Mammary epithelial cell (primary cell): ENCODE measurements at regions of chr9 and their contacts with region 1.

Region 1: GRCh38 chr9:83062656-83063527 is at the start of gene RASEF:
- DNase-seq: peak; percentile 78
- H3K4me3 ChIP-seq: peak within 1 kb of the TSS; percentile 64 to 74 (median 69)
- H3K27ac ChIP-seq: peak within 1 kb of the TSS; percentile 36
- H3K4me1 ChIP-seq: peaks cover 32% of the 10 kb centered on the region
- H3K27me3 ChIP-seq: no peaks in the 10 kb centered on the region
- CTCF ChIP-seq: peak in 1 of 2 donors; percentile 24
- total RNA-seq, gene RASEF: 1.5 to 3.3 TPM

Region 2: DNA sequence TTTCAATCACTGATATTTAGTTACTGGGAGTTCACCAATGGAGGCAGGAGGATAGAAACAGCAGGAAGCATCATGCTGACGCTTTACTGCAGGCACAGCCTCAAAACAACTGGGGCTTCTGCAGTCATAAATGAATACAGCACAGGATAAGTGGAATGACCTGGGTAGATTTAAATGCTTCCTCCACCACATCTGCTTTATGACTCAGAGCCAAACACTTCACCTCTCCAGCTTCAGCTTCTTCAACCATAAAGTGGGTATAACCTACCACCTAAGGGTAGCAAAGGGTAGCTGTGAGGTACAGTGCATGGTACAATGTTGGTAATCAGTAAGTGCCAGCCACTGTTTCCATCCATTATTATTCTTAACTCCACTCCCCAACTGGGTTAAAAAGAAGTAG is 28.3 kb before region 1 on chr9:
- CTCF ChIA-PET with region 1: no interaction called
- dilution Hi-C with region 1: no loop called
- in situ Hi-C with region 1: no loop called
- intact Hi-C with region 1: no loop called
- DNase-seq: peak; percentile 74
- H3K4me3 ChIP-seq: no peak overlapping the region
- H3K27ac ChIP-seq: no peak overlapping the region
- H3K4me1 ChIP-seq: peaks cover 17% of the 10 kb centered on the region
- H3K27me3 ChIP-seq: no peaks in the 10 kb centered on the region
- CTCF ChIP-seq: no peak

Region 3: DNA sequence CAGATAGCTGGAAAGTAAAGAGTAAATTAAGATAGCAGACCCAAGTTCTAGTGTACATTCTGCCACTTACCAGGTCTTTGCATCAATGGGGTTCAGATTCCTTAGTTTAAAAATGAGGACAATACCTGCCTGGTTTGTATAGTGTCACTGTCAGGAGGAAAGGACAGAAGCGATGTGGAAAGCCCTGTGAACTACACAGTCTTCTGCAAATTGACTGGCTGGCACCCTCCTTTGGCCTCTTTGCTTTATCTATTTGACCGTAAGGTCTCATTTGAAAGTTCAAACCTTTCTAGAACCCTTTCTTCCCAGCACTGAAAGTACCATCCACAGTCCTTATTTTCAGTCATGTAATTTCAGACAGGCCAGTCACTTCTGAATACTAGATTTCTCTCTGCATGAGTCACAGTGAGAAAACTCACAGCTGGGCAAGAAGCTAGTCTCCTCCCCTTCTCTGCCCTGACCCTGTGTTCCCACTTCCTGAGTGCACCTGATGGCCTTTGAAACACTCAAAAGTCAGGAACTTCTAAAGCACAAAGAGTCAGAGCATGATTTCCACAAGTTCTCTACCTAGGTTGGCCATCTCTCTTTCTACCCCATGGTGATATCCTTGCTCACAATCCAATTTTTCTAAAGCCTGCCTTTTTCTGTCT is 91.3 kb after region 1 on chr9:
- CTCF ChIA-PET with region 1: no interaction called
- dilution Hi-C with region 1: no loop called
- in situ Hi-C with region 1: no loop called
- intact Hi-C with region 1: loop called (anchors 5 kb)
- DNase-seq: peak; percentile 90
- H3K4me3 ChIP-seq: no peak overlapping the region
- H3K27ac ChIP-seq: peak overlapping the region; percentile 74
- H3K4me1 ChIP-seq: peaks cover 23% of the 10 kb centered on the region
- H3K27me3 ChIP-seq: no peaks in the 10 kb centered on the region
- CTCF ChIP-seq: no peak